Activated T-helper 2 cell treated with anti-CD3 and anti-CD28 coated beads, Interferon-gamma antibody, Interleukin-2, Interleukin-4, amounts not matched to agents 10 μg/mL and 5 μg/mL and 100 μg/mL, durations not matched to agents 14 hours and 24 hours and 36 hours (primary cell): ENCODE measurements at regions of chr1 and their contacts with region 1.

Region 1: GRCh38 chr1:5975133-5975880 is 16.9 kb downstream of the NPHP4 start:
- DNase-seq: peak; percentile 51
- H3K4me3 Mint-ChIP-seq: peak overlapping the region; percentile 39
- H3K27ac Mint-ChIP-seq: peak overlapping the region; percentile 70
- H3K4me1 Mint-ChIP-seq: peaks cover 7% of the 10 kb centered on the region
- H3K27me3 Mint-ChIP-seq: no peaks in the 10 kb centered on the region

Region 2: GRCh38 chr1:5514519-5515183 is 460.7 kb before region 1 on chr1:
- intact Hi-C with region 1: loop called (anchors 2 kb)
- DNase-seq: peak; percentile 47
- H3K4me3 Mint-ChIP-seq: no peak overlapping the region
- H3K27ac Mint-ChIP-seq: no peak overlapping the region
- H3K4me1 Mint-ChIP-seq: no peaks in the 10 kb centered on the region
- H3K27me3 Mint-ChIP-seq: no peaks in the 10 kb centered on the region

Region 3: DNA sequence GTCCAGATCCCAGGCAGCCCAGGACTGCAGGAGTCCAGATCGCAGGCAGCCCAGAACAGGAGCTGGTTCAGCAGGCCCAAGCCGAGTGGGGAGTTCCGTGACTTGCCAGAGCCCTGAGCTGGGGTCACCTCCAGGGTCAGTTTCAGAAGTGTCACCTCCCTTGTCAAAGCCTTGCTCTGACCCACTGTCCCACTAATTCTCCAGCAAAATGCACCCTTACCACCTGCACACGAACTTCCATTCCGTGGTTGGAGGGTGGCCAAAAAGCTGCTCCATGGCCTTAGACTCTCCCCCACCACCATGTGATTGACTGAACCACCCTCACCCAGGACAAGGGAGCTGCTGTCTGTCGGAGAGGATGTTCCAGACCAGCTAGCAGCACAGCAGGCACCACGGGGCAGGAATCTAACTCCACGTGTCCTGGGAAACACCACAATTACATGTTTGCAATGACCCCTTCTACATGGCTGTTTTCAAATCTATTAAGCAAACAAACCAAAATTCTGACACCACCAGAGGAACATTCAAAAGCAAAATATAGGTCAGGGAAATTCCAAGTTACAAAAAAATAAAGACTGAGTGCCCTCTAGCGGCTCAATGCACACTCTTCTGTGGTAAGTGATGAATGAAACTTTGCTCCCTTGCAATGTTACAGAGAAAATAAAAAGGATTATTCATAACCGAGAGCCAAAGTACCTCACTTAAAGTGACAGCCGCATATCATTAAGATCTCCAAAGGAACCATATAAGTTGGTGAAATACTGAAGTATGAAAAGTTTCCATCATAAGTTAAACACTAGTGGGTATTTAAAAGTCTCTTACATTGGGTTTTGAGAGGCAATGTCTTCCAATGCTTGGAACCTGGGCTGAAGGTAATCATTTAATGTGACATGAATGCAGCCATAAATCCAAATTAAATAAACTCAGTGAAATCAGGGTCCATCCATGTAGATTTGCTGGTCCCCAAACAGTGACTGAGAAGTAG is 59.4 kb before region 1 on chr1:
- intact Hi-C with region 1: loop called (anchors 1 kb)
- DNase-seq: no peak
- H3K4me3 Mint-ChIP-seq: no peak overlapping the region
- H3K27ac Mint-ChIP-seq: peak overlapping the region; percentile 47
- H3K4me1 Mint-ChIP-seq: peaks cover 5% of the 10 kb centered on the region
- H3K27me3 Mint-ChIP-seq: no peaks in the 10 kb centered on the region